ENCODE measurements at regions of chr4 and their contacts with region 1.

Region 1: DNA sequence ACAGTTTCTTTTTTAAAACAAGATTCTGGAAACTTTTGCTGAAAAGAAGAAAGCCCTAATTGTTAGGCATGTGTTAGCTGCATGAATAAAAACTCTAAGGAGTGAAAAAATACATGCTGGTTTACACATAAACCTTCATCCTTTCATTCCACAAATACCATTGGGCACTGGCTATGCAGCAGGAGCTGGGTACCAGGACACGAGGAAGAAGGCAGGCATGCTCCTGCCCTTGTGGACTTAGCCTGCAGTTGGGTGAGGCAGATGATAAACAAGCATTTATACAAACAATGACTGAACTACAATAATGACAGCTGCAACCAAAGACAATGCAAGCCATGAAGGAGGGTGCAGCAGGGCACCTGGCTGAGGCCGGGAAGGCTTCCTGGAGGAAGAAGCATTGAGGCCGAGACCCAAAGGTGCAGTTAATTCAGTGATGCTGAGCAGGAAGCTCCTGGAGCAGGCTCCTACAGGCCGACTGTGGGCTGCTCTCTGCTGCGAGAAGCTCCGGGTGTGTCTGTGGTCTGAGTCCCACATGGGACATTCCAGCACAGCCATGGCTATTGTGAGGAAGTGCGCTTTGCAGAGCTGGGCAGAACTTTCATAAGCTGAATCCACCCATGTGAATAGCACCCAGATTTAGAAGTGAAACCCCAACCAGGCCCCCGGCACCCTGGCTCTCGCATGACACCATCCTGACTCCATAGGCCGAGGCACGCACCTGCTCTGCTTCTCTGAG is 44.0 kb upstream of the MXD4 start:
- DNase-seq: peak; percentile 9
- H3K4me3 ChIP-seq: no peak overlapping the region
- H3K27ac ChIP-seq: no peak overlapping the region
- H3K4me1 ChIP-seq: peaks cover 4% of the 10 kb centered on the region
- H3K27me3 ChIP-seq: no peaks in the 10 kb centered on the region
- CTCF ChIP-seq: no peak

Region 2: DNA sequence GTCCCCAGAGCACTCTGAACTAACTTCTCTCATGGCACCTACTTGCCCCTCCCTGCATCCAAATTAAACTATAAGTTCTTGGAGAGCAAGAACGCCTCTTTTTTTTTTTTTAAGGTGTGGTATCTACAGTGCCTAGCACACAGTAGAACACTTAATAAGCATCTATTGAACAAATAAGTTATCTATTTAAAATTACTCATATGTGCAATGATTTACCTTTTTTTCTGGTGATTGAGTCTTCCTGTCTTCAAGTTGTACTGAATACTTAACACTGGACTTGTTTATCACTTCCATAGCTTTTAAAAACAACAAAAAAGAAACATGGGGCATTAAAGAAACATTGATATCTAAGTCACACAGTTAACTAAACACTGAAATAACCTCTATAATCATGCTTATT is 93.1 kb before region 1 on chr4:
- CTCF ChIA-PET with region 1: no interaction called
- dilution Hi-C with region 1: loop called (anchors 5 kb)
- in situ Hi-C with region 1: no loop called
- intact Hi-C with region 1: no loop called
- DNase-seq: no peak
- H3K4me3 ChIP-seq: no peak overlapping the region
- H3K27ac ChIP-seq: no peak overlapping the region
- H3K4me1 ChIP-seq: peaks cover 8% of the 10 kb centered on the region
- H3K27me3 ChIP-seq: peaks cover 20% of the 10 kb centered on the region
- CTCF ChIP-seq: no peak

Region 3: DNA sequence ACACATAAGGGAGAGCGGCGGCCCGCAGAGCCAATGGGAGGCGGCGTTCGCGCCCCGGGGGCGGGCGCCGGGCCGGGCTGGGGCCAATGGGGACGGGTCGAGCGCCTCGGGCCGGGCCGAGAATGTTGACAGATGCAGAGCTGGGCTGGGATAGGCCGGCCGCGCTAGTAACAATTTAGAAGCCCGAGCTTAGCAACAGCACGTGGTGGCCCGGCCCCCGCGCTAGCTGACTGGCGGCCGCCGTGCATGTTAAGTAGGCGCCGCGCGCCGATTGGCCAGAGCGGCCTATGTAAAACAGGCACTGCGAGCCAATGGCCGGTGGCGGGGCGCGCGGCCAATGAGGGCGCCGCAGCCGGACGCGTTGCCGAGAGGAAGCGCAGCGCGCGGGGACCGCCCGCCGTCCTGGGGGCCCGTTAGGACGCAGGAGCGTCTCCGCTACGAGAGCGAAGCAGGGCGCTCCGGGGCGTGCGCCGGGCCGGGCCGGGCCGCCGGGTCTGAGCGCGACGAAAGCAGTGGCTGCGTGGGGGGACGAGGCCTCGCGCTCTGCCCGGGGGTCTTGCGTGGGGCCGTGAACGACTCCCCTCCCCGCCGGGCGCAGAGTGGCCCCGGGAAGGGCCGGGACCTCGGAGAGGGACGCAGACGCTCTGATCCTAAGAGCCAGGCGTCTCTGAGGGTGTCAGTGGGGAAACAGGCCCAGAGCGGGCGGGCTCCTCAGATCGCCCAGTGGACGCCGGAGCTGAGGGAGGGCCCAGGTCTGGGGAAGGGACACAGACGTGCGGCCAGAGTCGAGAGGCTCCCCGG is 43.6 kb before region 1 on chr4:
- CTCF ChIA-PET with region 1: no interaction called
- dilution Hi-C with region 1: loop called (anchors 5 kb)
- in situ Hi-C with region 1: no loop called
- intact Hi-C with region 1: no loop called
- DNase-seq: peak; percentile 100
- H3K4me3 ChIP-seq: peak overlapping the region; percentile 37 to 80 (median 52)
- H3K27ac ChIP-seq: no peak overlapping the region
- H3K4me1 ChIP-seq: peaks cover 18% of the 10 kb centered on the region
- H3K27me3 ChIP-seq: no peaks in the 10 kb centered on the region
- CTCF ChIP-seq: no peak

Region 4: DNA sequence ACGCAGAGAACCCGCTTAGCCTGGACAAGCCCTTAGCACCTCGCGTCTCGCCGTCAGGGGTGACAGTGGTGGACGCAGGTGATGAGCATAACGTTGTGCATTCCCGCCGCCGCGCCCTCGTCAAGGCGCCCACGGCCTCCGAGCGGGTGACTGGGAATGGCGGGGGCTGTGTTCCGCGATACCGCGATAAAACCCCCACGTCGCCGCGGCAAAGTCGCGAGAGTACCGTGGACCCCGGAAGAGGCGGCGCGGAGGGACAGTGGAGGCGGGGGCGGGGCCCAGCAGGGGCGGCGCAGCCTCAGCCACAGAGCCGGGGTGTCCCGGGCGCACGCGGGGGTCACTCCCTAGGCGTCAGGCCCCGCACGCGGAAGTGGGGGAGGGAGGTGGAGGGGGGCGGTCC is 58.7 kb after region 1 on chr4:
- CTCF ChIA-PET with region 1: no interaction called
- dilution Hi-C with region 1: loop called (anchors 5 kb)
- in situ Hi-C with region 1: no loop called
- intact Hi-C with region 1: no loop called
- DNase-seq: peak; percentile 14
- H3K4me3 ChIP-seq: peak overlapping the region; percentile 29 to 58 (median 48)
- H3K27ac ChIP-seq: no peak overlapping the region
- H3K4me1 ChIP-seq: peaks cover 11% of the 10 kb centered on the region
- H3K27me3 ChIP-seq: no peaks in the 10 kb centered on the region
- CTCF ChIP-seq: no peak

Region 5: GRCh38 chr4:2393353-2394270 is 87.7 kb after region 1 on chr4:
- CTCF ChIA-PET with region 1: no interaction called
- dilution Hi-C with region 1: loop called (anchors 5 kb)
- in situ Hi-C with region 1: no loop called
- intact Hi-C with region 1: no loop called
- DNase-seq: no peak
- H3K4me3 ChIP-seq: no peak overlapping the region
- H3K27ac ChIP-seq: no peak overlapping the region
- H3K4me1 ChIP-seq: no peaks in the 10 kb centered on the region
- H3K27me3 ChIP-seq: peaks cover 10% of the 10 kb centered on the region
- CTCF ChIP-seq: no peak

Region 6: GRCh38 chr4:2484993-2485392 is 179.1 kb after region 1 on chr4:
- CTCF ChIA-PET with region 1: no interaction called
- dilution Hi-C with region 1: loop called (anchors 5 kb)
- in situ Hi-C with region 1: no loop called
- intact Hi-C with region 1: no loop called
- DNase-seq: no peak
- H3K4me3 ChIP-seq: no peak overlapping the region
- H3K27ac ChIP-seq: no peak overlapping the region
- H3K4me1 ChIP-seq: peaks cover 9% of the 10 kb centered on the region
- H3K27me3 ChIP-seq: no peaks in the 10 kb centered on the region
- CTCF ChIP-seq: no peak